IMR-90 (cell line): ENCODE measurements at regions of chr5 and their contacts with region 1.

Region 1: GRCh38 chr5:147737921-147738320 is 44.6 kb downstream of the JAKMIP2 start:
- DNase-seq: no peak
- ATAC-seq: no peak
- H3K4me3 ChIP-seq: no peak overlapping the region
- H3K27ac ChIP-seq: no peak overlapping the region
- H3K4me1 ChIP-seq: no peaks in the 10 kb centered on the region
- H3K27me3 ChIP-seq: no peaks in the 10 kb centered on the region
- CTCF ChIP-seq: no peak
- POLR2A ChIP-seq: no peak
- RAD21 ChIP-seq: no peak

Region 2: DNA sequence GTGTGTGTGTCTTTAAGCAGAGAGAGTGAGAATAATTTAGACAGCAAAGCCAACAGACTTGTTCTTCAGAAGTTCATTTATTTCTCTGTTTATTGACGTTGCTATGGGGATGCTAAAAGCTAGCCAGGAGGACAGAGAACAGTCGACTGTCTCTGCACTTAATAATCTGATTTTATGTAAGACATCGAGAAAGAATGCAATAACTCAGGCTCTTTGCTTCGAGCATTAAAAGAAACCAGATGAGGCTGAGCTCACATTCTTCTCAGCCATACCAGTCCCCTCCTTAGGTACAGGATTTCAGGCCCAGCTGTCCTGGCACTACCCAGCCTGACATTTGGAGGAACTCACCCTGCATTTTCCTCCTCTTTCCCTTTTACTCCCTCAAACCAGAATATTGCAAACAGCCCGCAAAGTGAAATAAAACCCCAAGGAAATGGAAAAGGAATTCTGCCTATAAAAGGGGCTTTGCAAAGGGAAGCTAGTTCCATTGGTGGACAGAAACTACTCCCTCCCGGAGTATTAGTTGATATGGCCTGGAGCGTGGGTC is 183.6 kb before region 1 on chr5:
- CTCF ChIA-PET with region 1: no interaction called
- POLR2A ChIA-PET with region 1: no interaction called
- dilution Hi-C with region 1: no loop called
- in situ Hi-C with region 1: no loop called
- intact Hi-C with region 1: no loop called
- DNase-seq: peak; percentile 77
- ATAC-seq: peak; percentile 64
- H3K4me3 ChIP-seq: peak overlapping the region; percentile 13; the same call in 1 of the 2 replicates
- H3K27ac ChIP-seq: peak overlapping the region; percentile 39; the same call in 1 of the 2 replicates
- H3K4me1 ChIP-seq: peaks cover 2% of the 10 kb centered on the region
- H3K27me3 ChIP-seq: no peaks in the 10 kb centered on the region
- CTCF ChIP-seq: no peak
- POLR2A ChIP-seq: no peak
- RAD21 ChIP-seq: no peak

Region 3: DNA sequence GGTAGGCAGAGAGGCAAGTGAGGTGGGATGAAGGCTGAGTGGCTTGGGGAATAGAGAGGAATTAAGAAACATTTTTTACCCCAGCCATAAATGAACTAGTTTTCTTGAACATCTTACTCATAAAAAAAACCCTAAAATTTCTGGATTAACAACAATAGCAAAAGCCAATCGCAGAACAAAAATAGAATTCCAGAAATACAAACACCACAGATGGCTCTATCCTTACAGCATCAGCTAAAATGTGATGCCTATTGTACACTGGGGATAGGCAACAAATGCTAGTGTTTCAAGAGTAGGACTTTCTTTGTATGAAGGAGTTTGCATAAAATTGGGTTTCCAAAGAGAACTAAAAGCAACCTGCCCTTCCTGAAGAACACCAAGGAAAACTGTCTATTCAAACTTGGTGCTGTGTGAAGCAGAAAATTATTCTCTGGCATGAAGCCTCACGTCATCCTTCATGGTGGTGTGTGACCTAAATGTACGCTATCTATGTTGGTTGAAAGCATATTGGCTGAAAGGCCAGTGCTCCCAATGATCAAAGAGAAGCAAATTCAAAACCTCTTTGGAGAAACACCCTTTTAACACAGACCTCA is 38.3 kb before region 1 on chr5:
- CTCF ChIA-PET with region 1: no interaction called
- POLR2A ChIA-PET with region 1: no interaction called
- dilution Hi-C with region 1: no loop called
- in situ Hi-C with region 1: no loop called
- intact Hi-C with region 1: loop called (anchors 2 kb)
- DNase-seq: no peak
- ATAC-seq: no peak
- H3K4me3 ChIP-seq: no peak overlapping the region
- H3K27ac ChIP-seq: no peak overlapping the region
- H3K4me1 ChIP-seq: no peaks in the 10 kb centered on the region
- H3K27me3 ChIP-seq: no peaks in the 10 kb centered on the region
- CTCF ChIP-seq: no peak
- POLR2A ChIP-seq: no peak
- RAD21 ChIP-seq: no peak